Activated T-helper 2 cell treated with anti-CD3 and anti-CD28 coated beads, Interferon-gamma antibody, Interleukin-2, Interleukin-4, amounts not matched to agents 10 μg/mL and 5 μg/mL and 100 μg/mL, durations not matched to agents 14 hours and 24 hours and 36 hours (primary cell): ENCODE measurements at regions of chr7 and their contacts with region 1.

Region 1: GRCh38 chr7:94657771-94658693 is 2.1 kb upstream of the SGCE start:
- DNase-seq: peak; percentile 89
- H3K4me3 Mint-ChIP-seq: peak overlapping the region; percentile 82
- H3K27ac Mint-ChIP-seq: no peak overlapping the region
- H3K4me1 Mint-ChIP-seq: peaks cover 22% of the 10 kb centered on the region
- H3K27me3 Mint-ChIP-seq: peaks cover 24% of the 10 kb centered on the region

Region 2: DNA sequence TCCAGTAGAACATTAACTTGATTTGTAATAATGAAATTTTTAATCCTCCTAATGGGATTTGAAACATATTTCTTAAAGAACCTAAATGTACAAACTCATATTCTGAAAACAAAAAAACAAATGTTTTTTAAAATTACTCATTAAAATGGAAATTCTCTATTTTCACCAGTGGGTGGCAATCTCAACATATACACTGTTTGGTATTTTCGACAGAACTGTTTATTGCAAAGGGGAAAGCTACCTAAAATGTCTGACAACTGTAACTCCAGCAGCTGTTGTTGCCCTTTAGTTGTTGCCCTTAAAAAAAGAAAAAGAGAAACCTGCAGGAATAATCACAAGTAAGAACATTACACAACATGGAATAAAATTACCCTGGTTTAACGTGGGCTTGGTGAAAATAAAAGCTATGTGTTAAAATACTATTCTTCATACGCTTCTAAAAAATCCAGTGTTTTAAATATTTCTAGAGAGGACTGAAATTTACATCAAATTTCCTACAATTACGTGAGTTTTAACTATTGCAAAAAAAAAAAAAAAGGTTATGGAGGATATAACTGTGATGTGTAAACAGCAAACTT is 208.8 kb before region 1 on chr7:
- intact Hi-C with region 1: loop called (anchors 2 kb)
- DNase-seq: no peak
- H3K4me3 Mint-ChIP-seq: no peak overlapping the region
- H3K27ac Mint-ChIP-seq: no peak overlapping the region
- H3K4me1 Mint-ChIP-seq: no peaks in the 10 kb centered on the region
- H3K27me3 Mint-ChIP-seq: peaks cover 8% of the 10 kb centered on the region

Region 3: GRCh38 chr7:94620703-94621118 is 37.3 kb before region 1 on chr7:
- intact Hi-C with region 1: loop called (anchors 2 kb)
- DNase-seq: peak; percentile 20
- H3K4me3 Mint-ChIP-seq: no peak overlapping the region
- H3K27ac Mint-ChIP-seq: peak overlapping the region; percentile 40
- H3K4me1 Mint-ChIP-seq: peaks cover 10% of the 10 kb centered on the region
- H3K27me3 Mint-ChIP-seq: peaks cover 5% of the 10 kb centered on the region

Region 4: GRCh38 chr7:95476904-95477594 is 819.0 kb after region 1 on chr7:
- intact Hi-C with region 1: loop called (anchors 5 kb)
- DNase-seq: peak; percentile 34
- H3K4me3 Mint-ChIP-seq: no peak overlapping the region
- H3K27ac Mint-ChIP-seq: no peak overlapping the region
- H3K4me1 Mint-ChIP-seq: no peaks in the 10 kb centered on the region
- H3K27me3 Mint-ChIP-seq: peaks cover 10% of the 10 kb centered on the region